WTC11 (cell line): ENCODE measurements at regions of chr16 and their contacts with region 1.

Region 1: GRCh38 chr16:11255737-11256660 is at the start of gene SOCS1:
- DNase-seq: peak; percentile 90
- ATAC-seq: peak; percentile 62
- H3K4me3 Mint-ChIP-seq: peak within 1 kb of the TSS; percentile 87
- H3K27ac Mint-ChIP-seq: peak within 1 kb of the TSS; percentile 95
- H3K4me1 Mint-ChIP-seq: peaks cover 44% of the 10 kb centered on the region
- H3K27me3 Mint-ChIP-seq: no peaks in the 10 kb centered on the region; the same call in 1 of the 2 replicates
- CTCF ChIP-seq: peak; percentile 85
- total RNA-seq, gene SOCS1: 62.3 to 67.1 TPM (median 62.5 TPM) in 3 replicates

Region 2: DNA sequence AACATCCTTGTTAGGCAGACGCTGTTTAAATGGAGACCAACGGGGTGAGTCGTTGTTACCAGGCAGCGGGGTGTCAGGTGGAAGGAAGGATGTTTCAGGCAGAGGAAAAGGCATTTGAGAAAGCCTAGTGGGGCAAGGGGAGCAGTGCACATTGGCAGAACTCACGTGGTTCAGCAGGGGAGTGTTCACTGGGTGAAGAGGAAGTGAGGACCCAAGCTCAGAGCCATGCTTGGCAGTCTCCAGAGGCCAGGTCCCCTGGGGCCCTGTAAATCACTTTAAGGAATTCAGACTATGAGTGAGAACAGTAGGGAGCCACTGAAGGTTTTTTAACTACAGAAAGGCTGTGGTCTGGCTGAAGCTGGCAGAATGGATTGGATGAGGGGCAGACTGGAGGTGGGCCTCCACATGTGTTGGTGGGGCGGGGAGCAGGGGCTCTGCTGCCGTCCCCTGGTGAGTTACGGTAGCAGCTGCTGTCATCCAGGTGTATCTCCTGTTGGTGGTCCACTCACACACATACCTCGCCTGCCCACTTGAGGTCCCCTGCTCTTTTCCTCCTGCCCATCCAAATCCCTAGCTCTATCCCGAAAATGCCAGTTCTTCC is 306.5 kb before region 1 on chr16:
- CTCF ChIA-PET with region 1: interaction called, 16 read pairs
- POLR2A ChIA-PET with region 1: interaction called, 3 read pairs
- DNase-seq: peak; percentile 59
- ATAC-seq: peak; percentile 75
- H3K4me3 Mint-ChIP-seq: no peak overlapping the region
- H3K27ac Mint-ChIP-seq: peak overlapping the region; percentile 18
- H3K4me1 Mint-ChIP-seq: peaks cover 61% of the 10 kb centered on the region
- H3K27me3 Mint-ChIP-seq: no peaks in the 10 kb centered on the region
- CTCF ChIP-seq: no peak

Region 3: DNA sequence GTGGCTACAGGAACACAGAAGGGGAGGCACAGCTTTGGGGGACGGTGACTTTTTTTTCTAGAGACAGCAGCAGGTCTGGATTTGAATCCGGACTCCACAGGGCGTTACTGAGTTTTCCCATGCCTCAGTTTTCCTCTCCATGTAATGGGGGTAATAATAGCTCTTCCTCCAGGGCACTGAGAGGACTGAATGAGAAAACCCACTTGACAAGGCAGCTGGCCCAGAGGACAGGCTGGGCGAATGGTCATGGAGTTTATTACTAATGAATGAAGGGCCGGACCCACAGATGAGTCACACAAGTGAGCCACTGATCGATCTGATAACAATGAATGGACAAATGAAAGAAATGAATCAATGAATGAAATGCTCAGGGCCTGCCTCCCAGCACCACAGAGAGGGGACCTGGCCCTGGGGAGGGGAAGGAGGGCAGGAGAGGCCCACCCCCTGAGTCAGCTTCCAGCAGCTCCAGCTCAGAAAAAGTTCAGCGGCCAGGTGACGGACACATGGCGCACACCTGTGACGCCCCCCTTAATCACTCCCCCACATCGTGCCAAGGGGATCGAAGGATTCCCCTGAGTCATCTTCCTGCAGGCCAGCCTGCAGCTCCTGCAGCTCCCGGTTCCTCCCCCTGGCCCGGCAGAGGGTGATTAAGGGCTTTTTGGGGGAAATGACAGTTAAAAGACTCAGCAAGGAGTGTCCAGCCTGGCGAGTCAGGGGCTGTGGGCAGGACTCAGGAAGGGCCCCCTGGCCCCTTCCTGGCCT is 54.3 kb before region 1 on chr16:
- CTCF ChIA-PET with region 1: interaction called, 18 read pairs
- POLR2A ChIA-PET with region 1: interaction called, 9 read pairs
- DNase-seq: peak; percentile 56
- ATAC-seq: peak; percentile 56
- H3K4me3 Mint-ChIP-seq: no peak overlapping the region
- H3K27ac Mint-ChIP-seq: 0 out of 2 replicates have a peak overlapping the region, but pooled peaks have one; percentile 25
- H3K4me1 Mint-ChIP-seq: peaks cover 41% of the 10 kb centered on the region
- H3K27me3 Mint-ChIP-seq: no peaks in the 10 kb centered on the region; the same call in 1 of the 2 replicates
- CTCF ChIP-seq: no peak

Region 4: DNA sequence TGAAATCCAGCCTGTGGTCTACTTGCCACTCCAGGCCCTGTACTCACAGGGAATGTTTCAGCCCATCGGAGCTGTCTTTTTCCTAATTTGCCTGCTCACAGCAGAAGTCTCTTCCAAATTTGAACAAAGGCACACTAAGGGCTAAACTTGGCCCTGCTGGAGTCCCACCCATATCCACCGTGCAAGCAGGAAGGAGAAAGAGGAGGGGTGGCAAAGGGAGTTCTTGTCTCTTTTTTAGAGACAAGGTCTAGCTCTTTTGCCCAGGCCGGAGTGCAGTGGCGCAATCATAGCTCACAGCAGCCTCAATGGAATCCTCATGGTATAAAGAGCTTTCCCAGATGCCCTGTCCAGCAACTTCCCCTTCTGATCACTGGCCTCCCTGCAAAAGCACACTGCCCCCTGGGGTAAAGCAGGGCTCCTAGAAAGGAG is 27.8 kb after region 1 on chr16:
- CTCF ChIA-PET with region 1: interaction called, 21 read pairs
- POLR2A ChIA-PET with region 1: interaction called, 4 read pairs
- DNase-seq: no peak
- ATAC-seq: peak; percentile 38; the same call in 1 of the 2 replicates
- H3K4me3 Mint-ChIP-seq: no peak overlapping the region
- H3K27ac Mint-ChIP-seq: no peak overlapping the region
- H3K4me1 Mint-ChIP-seq: peaks cover 13% of the 10 kb centered on the region
- H3K27me3 Mint-ChIP-seq: no peaks in the 10 kb centered on the region; the same call in 1 of the 2 replicates
- CTCF ChIP-seq: no peak

Region 5: GRCh38 chr16:11312718-11313492 is 56.9 kb after region 1 on chr16:
- CTCF ChIA-PET with region 1: interaction called, 13 read pairs
- POLR2A ChIA-PET with region 1: interaction called, 27 read pairs
- DNase-seq: peak; percentile 53
- ATAC-seq: peak; percentile 3; the same call in 1 of the 2 replicates
- H3K4me3 Mint-ChIP-seq: peak overlapping the region; percentile 50
- H3K27ac Mint-ChIP-seq: peak overlapping the region; percentile 98
- H3K4me1 Mint-ChIP-seq: peaks cover 71% of the 10 kb centered on the region
- H3K27me3 Mint-ChIP-seq: no peaks in the 10 kb centered on the region
- CTCF ChIP-seq: no peak

Region 6: DNA sequence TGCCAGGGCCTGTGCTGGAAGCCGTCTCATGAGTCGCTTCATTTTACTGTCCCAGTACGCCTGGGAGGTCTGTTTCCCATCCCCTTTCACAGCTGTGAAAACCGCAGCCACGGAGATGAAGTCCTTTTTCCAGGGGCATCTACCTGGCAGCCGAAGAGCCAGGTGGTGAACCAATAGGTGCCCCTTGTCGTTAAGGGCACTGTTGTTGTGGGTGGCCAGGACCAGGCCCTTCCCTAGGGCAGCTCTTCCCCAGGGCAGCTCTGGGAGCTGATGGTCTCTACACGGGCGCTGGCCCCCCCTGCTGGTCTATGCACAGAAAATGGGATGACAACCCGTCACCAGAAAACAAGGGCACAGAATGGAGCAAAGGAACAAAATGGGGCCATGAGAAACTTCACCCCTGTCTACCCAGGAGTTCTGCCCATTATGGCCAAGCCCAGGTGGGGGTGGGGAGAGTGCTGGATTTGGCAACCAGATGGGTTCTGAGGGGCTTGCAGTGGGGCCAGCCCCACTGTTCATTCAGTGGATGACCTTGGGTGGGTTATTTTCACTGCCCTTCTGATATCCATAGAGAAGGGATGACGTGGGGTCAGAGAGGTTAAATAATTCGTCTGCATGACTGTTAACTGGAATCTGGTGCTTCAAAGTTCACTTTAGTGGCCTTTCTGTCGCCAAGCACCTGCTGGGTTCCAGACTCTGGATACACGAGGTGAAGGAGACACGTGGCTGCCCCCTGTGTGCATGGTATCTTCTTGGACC is 100.8 kb after region 1 on chr16:
- CTCF ChIA-PET with region 1: interaction called, 104 read pairs
- POLR2A ChIA-PET with region 1: interaction called, 13 read pairs
- DNase-seq: peak; percentile 80
- ATAC-seq: peak; percentile 90
- H3K4me3 Mint-ChIP-seq: no peak overlapping the region
- H3K27ac Mint-ChIP-seq: no peak overlapping the region
- H3K4me1 Mint-ChIP-seq: peaks cover 58% of the 10 kb centered on the region
- H3K27me3 Mint-ChIP-seq: no peaks in the 10 kb centered on the region
- CTCF ChIP-seq: peak; percentile 38; the same call in 1 of the 2 replicates

Region 7: DNA sequence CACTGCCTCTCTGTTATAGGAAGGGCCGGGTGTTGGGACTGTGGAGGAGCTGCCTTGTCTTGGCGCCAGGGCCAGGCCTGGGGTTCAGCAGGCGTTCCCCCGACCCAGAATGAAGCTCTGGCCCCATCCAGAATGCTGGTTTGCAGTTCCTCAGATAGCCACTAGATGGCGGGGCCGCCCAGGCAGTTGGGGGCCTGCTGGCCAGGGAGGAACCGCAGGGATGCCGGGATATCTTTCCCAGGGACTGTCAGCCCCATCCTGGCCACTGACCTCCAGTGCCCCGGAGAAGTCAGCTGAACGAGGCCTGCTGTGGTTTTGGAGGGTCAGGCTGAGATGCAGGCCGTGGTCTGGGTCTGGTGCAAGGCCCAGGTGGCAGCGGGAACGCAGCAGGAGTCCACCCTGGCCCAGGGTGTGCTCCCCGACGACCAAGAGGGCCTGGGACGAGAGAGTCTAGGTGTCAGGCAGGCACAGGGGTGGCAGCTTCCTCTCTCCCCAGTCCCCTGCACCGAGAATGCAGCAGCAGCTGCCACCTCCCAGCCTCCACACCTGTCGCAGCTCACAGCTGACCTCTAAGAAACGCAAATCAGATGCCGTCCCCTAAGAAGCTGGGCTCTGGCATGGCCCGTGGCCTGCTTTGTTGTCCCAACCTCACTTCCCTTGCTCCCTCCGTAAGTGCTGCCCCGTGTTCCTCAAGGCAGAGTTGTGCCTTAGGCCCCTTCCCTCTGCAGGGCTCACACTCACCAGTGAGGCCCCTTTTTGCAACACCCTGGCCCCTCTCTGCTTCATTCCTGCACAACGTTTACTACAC is 140.4 kb after region 1 on chr16:
- CTCF ChIA-PET with region 1: interaction called, 15 read pairs
- POLR2A ChIA-PET with region 1: no interaction called
- DNase-seq: peak; percentile 93
- ATAC-seq: peak; percentile 80
- H3K4me3 Mint-ChIP-seq: no peak overlapping the region
- H3K27ac Mint-ChIP-seq: peak overlapping the region; percentile 41; the same call in 1 of the 2 replicates
- H3K4me1 Mint-ChIP-seq: peaks cover 8% of the 10 kb centered on the region; the same call in 1 of the 2 replicates
- H3K27me3 Mint-ChIP-seq: no peaks in the 10 kb centered on the region
- CTCF ChIP-seq: peak; percentile 100